Head of caudate nucleus (tissue), 42 donors: ENCODE measurements at regions of chr5 and their contacts with region 1.

Region 1: DNA sequence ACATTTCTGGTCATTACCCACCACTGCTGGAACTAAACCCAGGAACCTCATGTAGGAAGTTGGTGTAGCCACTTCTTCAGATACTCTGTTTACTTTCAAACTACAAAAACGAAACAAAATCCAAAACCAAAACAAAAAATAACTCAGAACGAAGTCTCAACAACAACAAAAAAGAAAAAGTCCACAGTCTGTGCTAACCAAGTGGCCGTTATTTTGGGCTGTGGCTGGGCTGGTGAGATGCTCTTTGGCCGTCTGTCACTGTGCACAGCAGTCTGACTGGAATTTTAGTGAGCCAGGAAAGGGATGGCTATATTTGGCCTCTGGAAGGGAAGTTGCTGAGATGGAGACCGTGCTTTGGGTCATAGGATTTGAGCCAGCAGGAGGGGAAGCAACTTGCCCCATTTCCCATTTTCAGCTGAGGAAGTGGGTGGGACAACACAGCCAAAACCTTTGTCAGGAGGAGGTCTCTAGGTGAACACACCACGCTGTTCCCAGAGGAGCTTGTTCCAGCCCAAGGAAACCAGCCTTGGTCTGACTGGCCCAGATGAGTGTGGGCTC is 334.1 kb downstream of the ZSWIM6 start:
- DNase-seq: peak in 2 of 42 donors; percentile 3 to 41

Region 2: DNA sequence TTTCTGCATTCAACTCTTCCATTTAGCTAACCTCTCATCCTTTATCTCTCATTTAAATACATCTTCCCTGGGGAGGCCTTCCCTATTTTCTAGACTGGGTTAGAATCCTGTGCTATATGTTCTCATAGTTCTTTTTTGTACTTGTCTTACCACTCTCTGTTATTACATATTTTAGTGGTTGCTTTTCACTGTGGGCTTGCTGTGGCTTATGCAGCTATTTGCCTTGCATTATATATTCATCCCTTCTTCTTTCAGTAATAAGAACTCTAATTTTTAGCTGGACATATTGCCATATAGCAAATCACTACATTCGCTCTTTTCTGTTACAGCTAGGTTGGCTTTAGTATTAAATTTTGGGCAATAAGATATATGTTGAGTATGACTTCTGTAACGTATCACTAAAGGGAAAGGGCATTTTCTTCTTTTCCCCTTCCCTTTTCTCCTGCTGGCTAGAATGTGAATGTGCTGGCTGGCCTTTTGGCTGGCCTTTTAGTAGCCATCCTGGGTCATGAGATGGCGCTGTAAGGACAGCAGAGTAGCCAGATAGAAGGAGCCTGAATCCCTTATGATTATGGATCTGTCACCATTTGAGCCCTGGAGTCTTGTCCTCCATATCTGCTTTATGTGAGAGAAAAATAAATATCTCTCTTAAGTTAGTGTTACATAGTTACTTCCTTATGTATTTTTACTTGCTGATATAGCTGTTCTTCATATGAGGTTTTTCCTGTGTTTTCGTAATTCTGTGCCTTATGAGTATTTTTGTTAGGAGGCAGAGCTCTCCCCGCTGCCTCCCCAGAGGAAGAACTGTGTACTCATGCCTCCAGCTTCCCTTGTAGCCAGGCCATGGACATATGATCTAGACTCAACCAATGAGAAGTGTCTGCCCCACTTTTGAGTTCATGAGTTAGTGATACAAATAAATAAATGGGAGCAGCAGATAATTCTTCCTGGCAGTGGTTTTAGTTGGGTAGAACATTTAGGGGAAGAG is 655.4 kb before region 1 on chr5:
- intact Hi-C with region 1: no loop called
- DNase-seq: no peak

Region 3: GRCh38 chr5:61449804-61450492 is 216.2 kb before region 1 on chr5:
- intact Hi-C with region 1: no loop called
- DNase-seq: peak in 16 of 42 donors; percentile 24 to 79 (median 50)

Region 4: GRCh38 chr5:61805101-61805500 is 139.0 kb after region 1 on chr5:
- intact Hi-C with region 1: loop called (anchors 10 kb)
- DNase-seq: no peak